Adrenal gland (tissue), 19 donors: ENCODE measurements at regions of chr15 and their contacts with region 1.

Region 1: GRCh38 chr15:40600956-40601355 is 6.9 kb downstream of the KNL1 start:
- DNase-seq: no peak
- H3K4me3 ChIP-seq: no peak overlapping the region
- H3K27ac ChIP-seq: no peak overlapping the region
- H3K4me1 ChIP-seq: no peaks in the 10 kb centered on the region
- H3K27me3 ChIP-seq: peaks cover 3% of the 10 kb centered on the region
- CTCF ChIP-seq: no peak
- POLR2A ChIP-seq: no peak

Region 2: GRCh38 chr15:40044717-40045571 is 556.0 kb before region 1 on chr15:
- intact Hi-C with region 1: no loop called
- DNase-seq: peak; percentile 86 to 94 (median 89)
- H3K4me3 ChIP-seq: no peak overlapping the region
- H3K27ac ChIP-seq: peak overlapping the region in 1 of 5 donors; percentile 19
- H3K4me1 ChIP-seq: peaks cover 23 to 40% of the 10 kb centered on the region in 2 donors
- H3K27me3 ChIP-seq: no peaks in the 10 kb centered on the region
- CTCF ChIP-seq: peak; percentile 72 to 95 (median 91)
- POLR2A ChIP-seq: no peak

Region 3: GRCh38 chr15:40879604-40880003 is 278.6 kb after region 1 on chr15:
- intact Hi-C with region 1: loop called in 1 of 2 experiments (anchors 10 kb)
- DNase-seq: no peak
- H3K4me3 ChIP-seq: no peak overlapping the region
- H3K27ac ChIP-seq: no peak overlapping the region
- H3K4me1 ChIP-seq: no peaks in the 10 kb centered on the region
- H3K27me3 ChIP-seq: no peaks in the 10 kb centered on the region
- CTCF ChIP-seq: no peak
- POLR2A ChIP-seq: no peak